ENCODE measurements at regions of chr21 and their contacts with region 1.

Region 1: GRCh38 chr21:32569261-32570230 is 15.8 kb downstream of the TCP10L start:
- DNase-seq: peak; percentile 70 to 90 (median 80)
- ATAC-seq: peak; percentile 88 to 90
- H3K4me3 Mint-ChIP-seq: peak overlapping the region; percentile 89 to 98 (median 94)
- H3K27ac Mint-ChIP-seq: peak overlapping the region; percentile 89 to 97 (median 94)
- H3K4me1 Mint-ChIP-seq: peaks cover 8 to 27% (median 24%) of the 10 kb centered on the region in 4 donors
- H3K27me3 Mint-ChIP-seq: no peaks in the 10 kb centered on the region

Region 2: DNA sequence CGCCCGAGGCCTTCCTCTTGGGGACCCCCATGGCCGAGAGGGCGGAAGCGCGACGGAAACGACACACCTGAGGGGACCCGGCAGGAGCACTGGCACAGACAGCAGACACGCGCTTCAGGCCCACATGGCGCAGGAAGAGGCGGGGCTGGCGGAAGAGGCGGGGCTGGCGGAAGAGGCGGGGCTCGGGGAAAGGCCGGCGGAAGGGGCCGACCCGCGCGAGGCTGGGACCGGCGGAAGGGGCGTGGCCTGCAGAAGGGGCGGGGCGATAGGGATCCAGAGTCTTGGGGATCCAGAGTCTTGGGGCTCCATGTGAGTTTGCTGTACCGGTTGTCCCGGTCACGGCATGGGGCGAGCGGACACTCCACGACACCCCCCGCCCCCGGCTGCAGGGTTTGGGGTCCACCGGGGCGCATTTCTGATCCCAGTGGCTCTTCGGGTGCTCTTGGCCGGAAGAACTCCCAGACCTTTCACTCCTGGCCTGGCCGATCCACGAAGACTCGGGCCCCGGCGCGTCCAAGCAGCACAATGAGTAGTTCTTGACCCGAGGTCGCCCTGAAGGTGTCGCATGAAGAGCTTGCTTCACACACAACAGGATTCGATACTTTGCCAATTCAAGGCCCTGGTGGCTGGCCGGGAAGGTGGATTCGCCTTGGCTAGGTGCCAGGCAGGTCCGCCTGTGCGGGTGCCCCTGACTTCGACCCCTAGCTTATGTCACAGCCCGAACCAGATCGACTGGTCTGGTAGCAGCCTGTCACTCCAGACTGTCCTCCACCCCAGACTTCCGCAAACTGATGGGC is 176.5 kb before region 1 on chr21 and contains the start of gene URB1:
- POLR2A ChIA-PET with region 1: interaction called, 15 read pairs
- DNase-seq: peak; percentile 90 to 99 (median 95)
- ATAC-seq: peak; percentile 93 to 98
- H3K4me3 Mint-ChIP-seq: peak within 1 kb of the TSS; percentile 81 to 91 (median 88)
- H3K27ac Mint-ChIP-seq: peak within 1 kb of the TSS; percentile 34 to 93 (median 85)
- H3K4me1 Mint-ChIP-seq: peaks cover 23 to 53% (median 48%) of the 10 kb centered on the region in 4 donors
- H3K27me3 Mint-ChIP-seq: peaks cover 0 to 8% (median 0%) of the 10 kb centered on the region in 5 donors
- polyA plus RNA-seq, gene URB1: 2.2 to 5.6 (median 2.8) TPM

Measured in naive thymus-derived CD8-positive, alpha-beta T cell (primary cell).